ENCODE measurements at regions of chr20 and their contacts with region 1.

Region 1: DNA sequence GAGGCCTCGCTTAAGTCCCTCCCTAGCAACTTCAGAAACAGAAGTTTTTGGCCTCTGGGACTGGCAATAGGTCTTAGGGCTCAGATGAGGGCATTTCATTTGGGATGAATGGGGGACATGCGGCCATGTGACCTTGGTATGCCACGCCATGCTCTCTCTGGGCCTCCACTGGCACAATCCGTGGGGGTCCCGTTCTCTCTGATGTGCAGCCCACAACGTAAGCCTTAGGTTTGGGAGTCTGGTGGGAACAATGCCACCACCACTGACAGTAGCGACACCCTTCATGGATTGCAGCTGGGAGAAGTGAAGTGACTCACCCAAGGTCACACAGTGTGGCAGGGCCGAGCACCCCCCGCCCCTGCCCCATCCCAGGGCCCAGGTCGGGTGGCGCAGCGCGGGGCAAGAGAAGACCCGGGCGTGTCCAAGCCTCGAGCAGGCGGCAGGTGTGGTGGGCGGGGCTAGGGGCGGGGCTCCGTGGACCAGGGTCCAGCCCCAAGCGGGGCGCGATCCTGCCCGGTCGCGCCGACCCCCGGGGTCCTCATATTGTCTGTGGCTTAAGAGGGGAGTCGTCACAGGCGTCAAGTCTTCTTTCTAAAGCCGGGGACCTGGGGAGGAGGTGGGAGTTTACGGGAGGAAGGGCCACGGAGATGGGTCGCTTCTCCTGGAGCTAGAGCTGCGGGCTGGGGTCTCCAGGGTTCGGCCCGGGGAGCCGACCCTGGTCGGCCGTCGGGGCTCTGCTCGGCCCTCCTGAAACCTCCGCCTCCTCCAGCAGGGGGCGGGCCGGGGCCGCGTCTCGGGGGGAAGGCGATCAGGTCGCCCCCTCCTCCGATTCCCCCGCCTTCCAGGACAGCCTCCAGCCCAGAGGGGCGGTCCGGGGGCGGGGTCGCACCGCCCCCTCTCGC is 698 bp upstream of the CEBPB start:
- DNase-seq: peak; percentile 73 to 92 (median 85)
- ATAC-seq: peak; percentile 84
- H3K4me3 ChIP-seq: peak overlapping the region; percentile 55
- H3K4me3 Mint-ChIP-seq: peak overlapping the region; percentile 25 to 93 (median 62)
- H3K27ac ChIP-seq: peak overlapping the region; percentile 77
- H3K27ac Mint-ChIP-seq: peak overlapping the region in 7 of 9 donors; percentile 16 to 71 (median 64)
- H3K4me1 ChIP-seq: peaks cover 11 to 21% of the 10 kb centered on the region in 2 donors
- H3K4me1 Mint-ChIP-seq: peaks cover 23 to 31% (median 26%) of the 10 kb centered on the region in 7 donors
- H3K27me3 ChIP-seq: no peaks in the 10 kb centered on the region
- H3K27me3 Mint-ChIP-seq: peaks cover 10 to 12% (median 11%) of the 10 kb centered on the region in 5 donors

Region 2: GRCh38 chr20:50146732-50147662 is 42.9 kb before region 1 on chr20:
- CTCF ChIA-PET with region 1: no interaction called
- POLR2A ChIA-PET with region 1: interaction called, 7 read pairs
- intact Hi-C with region 1: loop called in 1 of 2 experiments (anchors 1 kb)
- DNase-seq: peak; percentile 50 to 90 (median 85)
- ATAC-seq: peak; percentile 97
- H3K4me3 ChIP-seq: peak overlapping the region; percentile 44
- H3K4me3 Mint-ChIP-seq: peak overlapping the region; percentile 79 to 88 (median 85)
- H3K27ac ChIP-seq: peak overlapping the region; percentile 85
- H3K27ac Mint-ChIP-seq: peak overlapping the region; percentile 96 to 99 (median 98)
- H3K4me1 ChIP-seq: peaks cover 31 to 40% of the 10 kb centered on the region in 2 donors
- H3K4me1 Mint-ChIP-seq: peaks cover 59 to 77% (median 70%) of the 10 kb centered on the region in 7 donors
- H3K27me3 ChIP-seq: no peaks in the 10 kb centered on the region
- H3K27me3 Mint-ChIP-seq: no peaks in the 10 kb centered on the region

Region 3: GRCh38 chr20:50385733-50386640 is 196.1 kb after region 1 on chr20:
- CTCF ChIA-PET with region 1: no interaction called
- POLR2A ChIA-PET with region 1: no interaction called
- intact Hi-C with region 1: loop called (anchors 2 kb)
- DNase-seq: peak; percentile 36 to 78 (median 64)
- ATAC-seq: peak; percentile 93
- H3K4me3 ChIP-seq: no peak overlapping the region
- H3K4me3 Mint-ChIP-seq: peak overlapping the region; percentile 38 to 76 (median 61)
- H3K27ac ChIP-seq: no peak overlapping the region
- H3K27ac Mint-ChIP-seq: peak overlapping the region; percentile 51 to 90 (median 84)
- H3K4me1 ChIP-seq: peaks cover 26 to 37% of the 10 kb centered on the region in 2 donors
- H3K4me1 Mint-ChIP-seq: peaks cover 46 to 71% (median 59%) of the 10 kb centered on the region in 7 donors
- H3K27me3 ChIP-seq: no peaks in the 10 kb centered on the region
- H3K27me3 Mint-ChIP-seq: no peaks in the 10 kb centered on the region

Region 4: DNA sequence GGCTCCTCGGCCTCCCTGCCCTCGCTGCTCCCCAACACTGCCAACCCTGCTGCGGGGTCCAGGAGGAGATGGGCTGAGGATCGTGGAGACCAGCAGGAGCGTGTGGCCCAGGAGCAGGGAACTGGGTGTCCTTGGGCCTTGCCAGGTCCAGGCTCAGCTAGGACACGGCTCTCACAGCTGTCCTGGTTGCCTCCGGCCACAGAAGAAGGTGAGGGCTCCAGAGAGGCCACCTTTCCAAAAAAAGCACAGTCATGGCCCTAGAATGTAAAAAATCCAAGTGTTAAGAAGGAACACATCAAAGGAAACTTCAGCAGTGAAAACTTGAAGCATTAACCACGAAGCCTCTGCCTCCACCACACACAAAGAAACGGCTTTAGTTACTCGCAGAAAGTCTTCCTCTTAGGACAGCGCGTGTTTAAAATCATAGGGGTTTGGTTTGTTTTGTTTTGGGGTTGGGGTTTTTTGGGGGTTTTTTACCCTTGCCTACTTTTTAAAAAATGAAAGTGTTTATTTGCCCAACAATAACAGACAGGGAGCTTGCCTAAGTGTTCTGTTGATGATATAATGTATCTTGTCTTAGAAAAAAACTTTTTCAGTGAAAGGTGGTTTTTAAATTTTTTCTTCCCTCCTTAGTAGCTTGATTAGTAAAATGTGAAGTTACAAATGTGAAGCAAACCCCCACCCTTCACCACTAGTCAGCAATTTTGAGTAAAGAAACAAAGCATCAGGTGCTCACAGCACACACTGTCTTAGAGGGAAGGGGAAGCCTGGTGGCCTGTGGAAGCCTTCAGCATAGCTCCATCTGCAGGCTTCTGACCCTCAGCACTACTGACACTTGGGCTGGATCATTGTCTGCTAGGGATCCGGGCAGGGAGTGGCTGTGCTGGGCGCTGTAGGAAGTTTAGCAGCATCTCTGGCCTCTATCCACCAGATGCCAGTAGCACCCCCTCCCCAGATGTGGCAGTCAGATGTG is 380.2 kb after region 1 on chr20:
- CTCF ChIA-PET with region 1: interaction called, 3 read pairs
- POLR2A ChIA-PET with region 1: no interaction called
- intact Hi-C with region 1: loop called in 1 of 2 experiments (anchors 2 kb)
- DNase-seq: peak in 7 of 9 donors; percentile 18 to 49 (median 45)
- ATAC-seq: peak; percentile 79
- H3K4me3 ChIP-seq: no peak overlapping the region
- H3K4me3 Mint-ChIP-seq: peak overlapping the region; percentile 5 to 73 (median 45)
- H3K27ac ChIP-seq: peak overlapping the region; percentile 36
- H3K27ac Mint-ChIP-seq: peak overlapping the region; percentile 46 to 91 (median 83)
- H3K4me1 ChIP-seq: peaks cover 7 to 19% of the 10 kb centered on the region in 2 donors
- H3K4me1 Mint-ChIP-seq: peaks cover 39 to 75% (median 70%) of the 10 kb centered on the region in 7 donors
- H3K27me3 ChIP-seq: no peaks in the 10 kb centered on the region
- H3K27me3 Mint-ChIP-seq: no peaks in the 10 kb centered on the region

Region 5: DNA sequence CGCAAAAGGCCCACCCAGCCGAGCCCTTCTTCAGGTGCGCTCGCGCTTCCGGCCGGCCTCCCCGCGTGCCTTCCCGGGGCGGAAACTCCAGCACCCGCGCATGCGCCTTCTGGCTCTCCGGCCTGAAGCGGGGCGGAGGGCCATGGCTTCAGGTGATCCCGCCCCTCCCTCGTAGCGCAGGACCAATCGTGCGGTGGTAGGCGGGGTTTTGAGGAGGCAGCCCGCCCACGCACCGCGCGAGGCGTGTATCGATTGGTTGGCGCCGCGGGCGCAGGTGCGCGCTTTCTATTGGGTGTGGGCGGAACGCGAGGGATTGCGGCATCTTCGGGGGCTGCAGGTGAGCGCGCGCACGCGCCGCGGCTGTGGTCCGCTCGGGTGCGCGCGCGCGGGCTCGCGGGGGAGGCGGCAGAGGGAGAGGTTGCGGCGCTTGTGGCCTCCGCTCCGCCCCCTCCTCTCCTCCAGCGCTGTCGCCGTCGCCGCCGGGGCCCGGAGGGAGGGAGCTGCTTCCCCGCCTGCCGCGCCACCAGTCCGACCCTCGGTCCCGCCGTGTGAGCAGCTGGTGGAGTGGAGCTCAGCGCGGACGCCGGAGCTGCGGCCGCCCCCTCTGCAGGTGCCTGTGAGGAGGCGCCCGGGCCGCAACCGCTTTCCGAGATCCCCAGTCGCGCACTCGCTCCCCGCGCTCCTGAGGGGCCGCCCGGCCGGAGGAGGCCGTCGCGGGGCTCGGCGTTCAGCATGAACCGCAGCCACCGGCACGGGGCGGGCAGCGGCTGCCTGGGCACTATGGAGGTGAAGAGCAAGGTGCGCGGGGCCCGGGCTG is 541.3 kb after region 1 on chr20 and contains the start of gene PARD6B:
- CTCF ChIA-PET with region 1: no interaction called
- POLR2A ChIA-PET with region 1: no interaction called
- intact Hi-C with region 1: loop called in 1 of 2 experiments (anchors 1 kb)
- DNase-seq: peak; percentile 94 to 100 (median 100)
- ATAC-seq: peak; percentile 97
- H3K4me3 ChIP-seq: peak within 1 kb of the TSS; percentile 80
- H3K4me3 Mint-ChIP-seq: peak within 1 kb of the TSS; percentile 79 to 94 (median 88)
- H3K27ac ChIP-seq: peak within 1 kb of the TSS; percentile 80
- H3K27ac Mint-ChIP-seq: peak within 1 kb of the TSS; percentile 75 to 95 (median 83)
- H3K4me1 ChIP-seq: peaks cover 9 to 14% of the 10 kb centered on the region in 2 donors
- H3K4me1 Mint-ChIP-seq: peaks cover 22 to 45% (median 34%) of the 10 kb centered on the region in 7 donors
- H3K27me3 ChIP-seq: no peaks in the 10 kb centered on the region
- H3K27me3 Mint-ChIP-seq: peaks cover 0 to 3% (median 0%) of the 10 kb centered on the region in 5 donors
- total RNA-seq, gene PARD6B: 5.2 to 10.8 (median 7.7) TPM

Measured in naive thymus-derived CD4-positive, alpha-beta T cell (primary cell).